ENCODE measurements at regions of chr1 and their contacts with region 1.

Region 1: DNA sequence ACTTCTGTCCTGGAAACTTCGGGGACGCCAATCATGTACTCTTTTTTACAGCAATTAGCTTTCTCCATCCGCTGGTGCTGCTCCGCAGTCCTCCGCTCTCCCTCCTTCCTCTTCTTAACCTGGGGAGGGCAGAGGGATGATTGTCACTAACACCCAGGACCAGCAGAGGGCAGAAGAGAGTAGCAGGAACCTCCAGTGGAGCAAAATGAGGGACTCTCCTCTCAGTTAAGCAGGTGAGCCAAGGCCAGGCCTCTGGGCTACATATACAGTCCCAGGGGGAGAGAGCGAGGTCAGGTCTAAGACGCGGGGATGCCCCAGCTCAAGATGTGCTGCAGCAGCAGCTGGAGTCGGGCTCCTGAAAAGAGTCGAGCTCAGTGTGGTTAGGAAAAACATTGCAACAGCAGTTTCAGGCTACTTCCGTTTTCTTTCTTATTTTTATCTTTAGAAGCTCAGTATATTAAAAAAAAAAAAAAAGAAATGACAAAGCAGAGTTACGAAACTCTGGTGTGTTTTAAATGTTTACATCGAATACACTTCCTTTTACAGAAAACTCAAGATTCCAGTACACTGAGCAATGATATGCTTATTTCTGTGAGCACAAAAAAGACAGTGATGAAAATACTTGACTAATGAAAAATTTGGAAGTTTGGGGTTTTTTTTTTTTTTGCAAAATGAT is 25.7 kb upstream of the NLRP3 start:
- DNase-seq: peak; percentile 97 to 100 (median 99)
- H3K4me3 ChIP-seq: peak overlapping the region in 6 of 7 experiments; percentile 1 to 64 (median 34)
- H3K27ac ChIP-seq: peak overlapping the region; percentile 50 to 77
- H3K4me1 ChIP-seq: peaks cover 8 to 49% (median 43%) of the 10 kb centered on the region in 4 experiments
- H3K27me3 ChIP-seq: no peaks in the 10 kb centered on the region

Region 2: GRCh38 chr1:247373721-247374141 is 16.5 kb before region 1 on chr1:
- CTCF ChIA-PET with region 1: interaction called, 34 read pairs
- POLR2A ChIA-PET with region 1: no interaction called
- DNase-seq: peak; percentile 71 to 78 (median 76)
- H3K4me3 ChIP-seq: peak overlapping the region; percentile 10 to 78 (median 52)
- H3K27ac ChIP-seq: no peak overlapping the region
- H3K4me1 ChIP-seq: peaks cover 0 to 3% (median 2%) of the 10 kb centered on the region in 4 experiments
- H3K27me3 ChIP-seq: no peaks in the 10 kb centered on the region

Region 3: GRCh38 chr1:247409869-247410544 is 19.8 kb after region 1 on chr1:
- CTCF ChIA-PET with region 1: interaction called, 47 read pairs
- POLR2A ChIA-PET with region 1: interaction called, 21 read pairs
- DNase-seq: peak in 2 of 3 donors; percentile 57
- H3K4me3 ChIP-seq: peak overlapping the region in 3 of 7 experiments; percentile 8 to 46 (median 38)
- H3K27ac ChIP-seq: peak overlapping the region; percentile 47 to 66
- H3K4me1 ChIP-seq: peaks cover 23 to 61% (median 49%) of the 10 kb centered on the region in 4 experiments
- H3K27me3 ChIP-seq: no peaks in the 10 kb centered on the region

Region 4: DNA sequence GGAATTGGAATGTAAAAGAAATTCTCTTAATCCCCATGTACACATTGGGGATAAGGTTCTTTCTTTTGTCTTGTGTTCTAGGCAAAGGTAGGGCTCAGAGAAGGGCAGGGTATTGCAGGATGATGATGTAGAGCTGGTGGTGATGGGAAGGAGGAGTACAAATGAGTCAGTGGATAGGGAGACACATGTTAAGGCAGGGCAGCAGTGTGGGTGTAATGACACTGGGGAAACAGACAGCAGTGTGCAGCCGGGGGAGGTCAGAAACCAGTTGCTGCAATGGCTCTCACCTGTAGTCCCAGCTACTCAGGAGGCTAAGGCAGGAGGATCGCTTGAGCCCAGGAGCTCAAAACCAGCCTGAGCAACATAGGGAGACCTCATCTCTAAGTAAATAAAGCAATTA is 30.8 kb after region 1 on chr1:
- CTCF ChIA-PET with region 1: interaction called, 47 read pairs
- POLR2A ChIA-PET with region 1: interaction called, 21 read pairs
- DNase-seq: peak in 1 of 3 donors; percentile 36
- H3K4me3 ChIP-seq: peak overlapping the region in 3 of 7 experiments; percentile 33 to 55 (median 44)
- H3K27ac ChIP-seq: no peak overlapping the region
- H3K4me1 ChIP-seq: peaks cover 17 to 46% (median 36%) of the 10 kb centered on the region in 4 experiments
- H3K27me3 ChIP-seq: no peaks in the 10 kb centered on the region

Region 5: GRCh38 chr1:247440001-247440620 is 49.9 kb after region 1 on chr1:
- CTCF ChIA-PET with region 1: interaction called, 13 read pairs
- POLR2A ChIA-PET with region 1: no interaction called
- DNase-seq: peak in 1 of 3 donors; percentile 14
- H3K4me3 ChIP-seq: no peak overlapping the region
- H3K27ac ChIP-seq: no peak overlapping the region
- H3K4me1 ChIP-seq: peaks cover 0 to 6% (median 0%) of the 10 kb centered on the region in 4 experiments
- H3K27me3 ChIP-seq: no peaks in the 10 kb centered on the region

Region 6: GRCh38 chr1:247487057-247487456 is 96.8 kb after region 1 on chr1:
- CTCF ChIA-PET with region 1: interaction called, 96 read pairs
- POLR2A ChIA-PET with region 1: no interaction called
- DNase-seq: peak; percentile 74 to 81 (median 78)
- H3K4me3 ChIP-seq: no peak overlapping the region
- H3K27ac ChIP-seq: no peak overlapping the region
- H3K4me1 ChIP-seq: peaks cover 0 to 2% (median 1%) of the 10 kb centered on the region in 4 experiments
- H3K27me3 ChIP-seq: peaks cover 0 to 4% (median 0%) of the 10 kb centered on the region in 5 experiments